ENCODE measurements at regions of chr22 and their contacts with region 1.

Region 1: GRCh38 chr22:41697126-41697775 is 2.1 kb upstream of the MEI1 start:
- DNase-seq: peak; percentile 91
- ATAC-seq: peak; percentile 87
- H3K4me3 ChIP-seq: peak overlapping the region in 1 of 5 experiments; percentile 10
- H3K4me3 Mint-ChIP-seq: peak overlapping the region; percentile 78
- H3K27ac ChIP-seq: peak overlapping the region in 1 of 2 donors; percentile 18
- H3K27ac Mint-ChIP-seq: peak overlapping the region; percentile 88
- H3K4me1 ChIP-seq: peaks cover 8 to 18% of the 10 kb centered on the region in 2 donors
- H3K4me1 Mint-ChIP-seq: peaks cover 9% of the 10 kb centered on the region
- H3K27me3 ChIP-seq: no peaks in the 10 kb centered on the region
- H3K27me3 Mint-ChIP-seq: no peaks in the 10 kb centered on the region
- CTCF ChIP-seq: peak; percentile 96

Region 2: DNA sequence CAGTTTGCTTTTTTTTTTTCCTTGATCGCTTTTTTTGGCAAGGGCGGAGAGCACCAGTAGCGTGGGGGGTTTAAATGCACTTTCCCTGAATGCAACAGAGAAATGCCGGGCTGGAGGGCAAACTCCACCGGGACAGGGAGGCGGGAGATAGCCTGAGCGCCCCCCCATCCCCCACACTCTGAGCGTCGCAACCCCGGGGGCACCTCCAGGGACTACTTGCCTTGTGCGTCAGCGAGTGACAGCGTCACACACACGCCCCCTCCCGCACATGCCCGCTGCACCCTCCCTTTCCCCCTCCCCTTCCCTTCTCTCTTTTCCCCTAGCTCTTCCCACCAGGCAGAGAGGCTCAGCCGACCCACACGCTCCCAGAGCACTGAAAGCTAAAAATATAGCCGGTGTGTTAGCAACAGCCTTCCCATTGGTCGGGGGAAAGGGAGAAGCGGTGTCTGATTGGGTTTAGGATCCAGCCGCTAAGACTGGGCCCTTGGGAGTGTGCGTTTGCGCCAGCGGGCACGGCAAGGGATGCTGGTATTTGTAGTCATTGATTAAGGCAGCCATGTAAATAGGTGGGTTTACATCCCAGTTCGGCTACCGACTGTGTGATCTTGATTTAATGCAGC is 249.0 kb before region 1 on chr22:
- CTCF ChIA-PET with region 1: no interaction called
- POLR2A ChIA-PET with region 1: no interaction called
- intact Hi-C with region 1: no loop called
- DNase-seq: peak; percentile 96
- ATAC-seq: peak; percentile 60
- H3K4me3 ChIP-seq: peak overlapping the region; percentile 90 to 99 (median 97)
- H3K4me3 Mint-ChIP-seq: peak overlapping the region; percentile 99
- H3K27ac ChIP-seq: peak overlapping the region; percentile 97 to 98
- H3K27ac Mint-ChIP-seq: peak overlapping the region; percentile 94
- H3K4me1 ChIP-seq: peaks cover 8 to 25% of the 10 kb centered on the region in 2 donors
- H3K4me1 Mint-ChIP-seq: peaks cover 28% of the 10 kb centered on the region
- H3K27me3 ChIP-seq: no peaks in the 10 kb centered on the region
- H3K27me3 Mint-ChIP-seq: no peaks in the 10 kb centered on the region
- CTCF ChIP-seq: no peak

Region 3: GRCh38 chr22:41666661-41667258 is 30.5 kb before region 1 on chr22:
- CTCF ChIA-PET with region 1: interaction called, 23 read pairs
- POLR2A ChIA-PET with region 1: no interaction called
- intact Hi-C with region 1: no loop called
- DNase-seq: peak; percentile 95
- ATAC-seq: peak; percentile 96
- H3K4me3 ChIP-seq: peak overlapping the region in 4 of 5 experiments; percentile 24 to 64 (median 44)
- H3K4me3 Mint-ChIP-seq: peak overlapping the region; percentile 90
- H3K27ac ChIP-seq: peak overlapping the region; percentile 69 to 71
- H3K27ac Mint-ChIP-seq: peak overlapping the region; percentile 98
- H3K4me1 ChIP-seq: peaks cover 0 to 13% of the 10 kb centered on the region in 2 donors
- H3K4me1 Mint-ChIP-seq: peaks cover 7% of the 10 kb centered on the region
- H3K27me3 ChIP-seq: no peaks in the 10 kb centered on the region
- H3K27me3 Mint-ChIP-seq: no peaks in the 10 kb centered on the region
- CTCF ChIP-seq: peak; percentile 98

Region 4: GRCh38 chr22:41768430-41768829 is 71.2 kb after region 1 on chr22:
- CTCF ChIA-PET with region 1: interaction called, 44 read pairs
- POLR2A ChIA-PET with region 1: interaction called, 4 read pairs
- intact Hi-C with region 1: no loop called
- DNase-seq: no peak
- ATAC-seq: no peak
- H3K4me3 ChIP-seq: no peak overlapping the region
- H3K4me3 Mint-ChIP-seq: no peak overlapping the region
- H3K27ac ChIP-seq: no peak overlapping the region
- H3K27ac Mint-ChIP-seq: no peak overlapping the region
- H3K4me1 ChIP-seq: no peaks in the 10 kb centered on the region
- H3K4me1 Mint-ChIP-seq: no peaks in the 10 kb centered on the region
- H3K27me3 ChIP-seq: no peaks in the 10 kb centered on the region
- H3K27me3 Mint-ChIP-seq: peaks cover 4% of the 10 kb centered on the region
- CTCF ChIP-seq: no peak

Region 5: DNA sequence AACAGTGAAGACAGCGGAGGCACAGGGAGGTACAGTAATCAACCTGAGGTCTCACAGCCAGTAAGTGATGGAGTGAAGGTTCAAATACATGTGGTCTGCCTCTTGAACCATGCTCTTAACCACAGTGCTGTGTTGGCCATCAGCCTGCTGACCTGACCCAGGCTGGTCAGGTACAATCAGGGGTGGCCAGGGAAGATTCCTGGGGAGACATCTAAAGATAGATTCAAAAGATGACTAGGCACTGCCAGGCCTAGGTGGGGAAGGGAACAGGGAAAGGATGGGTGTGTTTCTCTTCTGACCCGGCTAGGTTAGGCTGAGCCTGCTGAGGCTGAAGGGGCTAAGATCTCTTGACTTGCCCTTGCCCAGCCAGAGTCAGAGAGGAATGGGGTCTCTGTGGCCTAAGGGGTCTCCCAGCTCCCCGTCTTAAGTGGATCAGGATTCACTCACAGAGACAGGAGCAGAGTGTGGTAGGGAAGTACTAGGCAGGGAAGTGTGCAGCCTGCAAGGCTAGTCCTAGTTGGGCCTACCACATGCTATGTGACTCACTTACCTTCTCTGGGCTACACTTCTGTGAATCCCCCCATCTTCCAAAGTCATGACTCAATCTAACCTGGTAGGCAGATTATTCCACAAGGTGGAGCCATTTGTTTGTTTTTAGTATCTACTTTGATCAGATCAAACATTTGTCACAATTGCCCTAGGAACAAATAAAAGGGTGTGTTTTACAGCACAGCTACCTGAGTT is 125.2 kb after region 1 on chr22:
- CTCF ChIA-PET with region 1: interaction called, 23 read pairs
- POLR2A ChIA-PET with region 1: interaction called, 3 read pairs
- intact Hi-C with region 1: loop called (anchors 2 kb)
- DNase-seq: peak; percentile 85
- ATAC-seq: peak; percentile 84
- H3K4me3 ChIP-seq: no peak overlapping the region
- H3K4me3 Mint-ChIP-seq: no peak overlapping the region
- H3K27ac ChIP-seq: no peak overlapping the region
- H3K27ac Mint-ChIP-seq: peak overlapping the region; percentile 57
- H3K4me1 ChIP-seq: no peaks in the 10 kb centered on the region
- H3K4me1 Mint-ChIP-seq: peaks cover 7% of the 10 kb centered on the region
- H3K27me3 ChIP-seq: no peaks in the 10 kb centered on the region
- H3K27me3 Mint-ChIP-seq: no peaks in the 10 kb centered on the region
- CTCF ChIP-seq: peak; percentile 74

Region 6: DNA sequence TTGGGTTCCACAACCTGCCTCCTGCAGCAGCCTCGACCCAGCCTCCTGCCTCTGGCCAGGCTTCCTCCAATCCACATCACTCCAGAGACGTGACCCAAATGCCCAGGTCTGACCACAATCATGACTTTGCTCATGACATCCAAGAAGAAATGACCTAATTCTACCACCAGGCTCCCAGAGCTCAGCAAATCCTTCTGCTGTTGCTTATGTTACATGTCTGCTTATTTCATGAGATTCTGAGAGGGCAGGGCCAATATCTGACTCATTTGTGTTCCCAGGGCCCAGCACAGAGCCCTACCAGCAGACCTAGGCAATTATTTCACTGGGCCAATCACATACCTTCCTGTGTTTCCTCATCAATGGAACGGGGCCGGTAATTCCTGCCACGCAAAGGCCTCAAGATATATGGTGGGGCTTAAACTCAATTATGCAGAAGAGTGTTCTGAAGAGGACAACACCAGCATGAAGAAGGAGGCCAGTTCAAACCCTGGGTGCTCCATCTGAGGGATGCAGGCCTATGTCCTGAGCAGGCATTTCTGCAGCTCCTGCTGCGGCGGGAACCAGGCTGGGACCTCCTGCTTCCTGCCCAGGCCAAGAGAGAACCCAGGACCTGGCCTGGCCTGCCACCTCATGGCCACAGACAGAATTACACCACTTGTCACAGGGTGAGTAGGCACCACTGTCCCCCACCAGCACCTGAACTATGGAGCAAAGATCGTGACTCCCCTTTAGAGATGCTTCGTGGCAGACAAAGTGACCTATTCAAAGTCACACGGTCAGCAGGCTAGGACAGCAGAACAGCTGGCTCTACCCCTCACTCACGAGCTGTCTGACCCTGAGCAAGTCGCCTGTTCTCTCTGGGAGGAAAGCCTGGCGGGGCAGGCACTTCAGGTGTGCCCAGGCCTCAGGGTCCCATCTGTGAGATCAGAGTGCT is 243.8 kb after region 1 on chr22:
- CTCF ChIA-PET with region 1: interaction called, 83 read pairs
- POLR2A ChIA-PET with region 1: interaction called, 8 read pairs
- intact Hi-C with region 1: no loop called
- DNase-seq: peak; percentile 92
- ATAC-seq: peak; percentile 48
- H3K4me3 ChIP-seq: peak overlapping the region in 1 of 5 experiments; percentile 21
- H3K4me3 Mint-ChIP-seq: peak overlapping the region; percentile 96
- H3K27ac ChIP-seq: peak overlapping the region; percentile 99
- H3K27ac Mint-ChIP-seq: peak overlapping the region; percentile 99
- H3K4me1 ChIP-seq: peaks cover 50 to 62% of the 10 kb centered on the region in 2 donors
- H3K4me1 Mint-ChIP-seq: peaks cover 55% of the 10 kb centered on the region
- H3K27me3 ChIP-seq: peaks cover 0 to 5% (median 0%) of the 10 kb centered on the region in 4 experiments
- H3K27me3 Mint-ChIP-seq: no peaks in the 10 kb centered on the region
- CTCF ChIP-seq: peak; percentile 93

Region 7: GRCh38 chr22:42070517-42071422 is 373.5 kb after region 1 on chr22 and contains the start of gene NAGA:
- CTCF ChIA-PET with region 1: interaction called, 4 read pairs
- POLR2A ChIA-PET with region 1: no interaction called
- intact Hi-C with region 1: loop called (anchors 5 kb)
- DNase-seq: peak; percentile 93
- ATAC-seq: peak; percentile 95
- H3K4me3 ChIP-seq: peak within 1 kb of the TSS; percentile 30 to 98 (median 82)
- H3K4me3 Mint-ChIP-seq: peak within 1 kb of the TSS; percentile 93
- H3K27ac ChIP-seq: peak within 1 kb of the TSS; percentile 64 to 69
- H3K27ac Mint-ChIP-seq: peak within 1 kb of the TSS; percentile 94
- H3K4me1 ChIP-seq: peaks cover 20 to 34% of the 10 kb centered on the region in 2 donors
- H3K4me1 Mint-ChIP-seq: peaks cover 46% of the 10 kb centered on the region
- H3K27me3 ChIP-seq: no peaks in the 10 kb centered on the region
- H3K27me3 Mint-ChIP-seq: no peaks in the 10 kb centered on the region
- CTCF ChIP-seq: no peak
- total RNA-seq, gene NAGA: 20.2 and 21.0 TPM in 2 replicates

Measured in B cell (primary cell).